ENCODE measurements at regions of chr7 and their contacts with region 1.

Region 1: GRCh38 chr7:158582089-158582456 is 5.5 kb downstream of the PTPRN2 start:
- DNase-seq: no peak
- H3K4me3 ChIP-seq: no peak overlapping the region
- H3K27ac ChIP-seq: no peak overlapping the region
- H3K4me1 ChIP-seq: no peaks in the 10 kb centered on the region
- H3K27me3 ChIP-seq: peaks cover 44% of the 10 kb centered on the region
- CTCF ChIP-seq: no peak

Region 2: DNA sequence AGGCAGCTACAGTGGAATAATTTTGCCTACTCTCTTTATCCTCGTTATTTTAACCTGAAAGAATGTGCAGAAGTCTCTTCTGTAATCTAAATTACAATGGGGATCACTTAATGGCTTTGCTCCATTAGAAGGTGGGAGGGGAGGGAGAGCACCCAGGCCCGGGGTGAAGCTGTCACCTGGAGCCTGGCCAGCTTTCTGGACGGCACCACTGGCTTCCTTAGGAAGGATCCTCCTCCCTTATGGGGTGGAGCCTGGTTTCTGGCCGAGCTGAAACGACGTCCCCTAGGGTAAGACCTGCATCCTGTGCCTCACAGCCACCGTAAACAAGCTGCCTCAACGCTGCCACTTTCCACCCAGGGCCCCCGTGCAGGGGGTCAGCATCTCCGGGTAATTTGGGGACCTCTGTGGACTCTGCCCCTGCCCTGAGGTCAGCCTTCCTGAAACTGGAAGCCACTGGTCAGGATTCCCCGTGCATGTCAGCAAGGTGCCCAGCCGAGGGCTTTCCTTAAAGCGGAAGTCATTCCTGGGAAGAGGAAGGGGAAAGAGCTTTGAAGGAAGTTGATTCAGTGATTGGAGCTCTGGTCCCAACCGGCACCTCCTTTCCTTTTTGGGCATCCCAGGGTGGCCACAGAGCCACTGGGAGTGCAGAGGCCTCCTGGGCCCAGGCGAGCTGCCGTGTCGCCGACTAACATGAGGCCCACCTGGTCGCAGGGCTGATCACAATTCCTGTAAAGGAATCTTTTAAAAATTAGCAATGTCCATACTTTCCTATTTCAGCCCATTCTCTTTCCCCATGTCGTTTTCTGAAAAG is 676.2 kb before region 1 on chr7:
- CTCF ChIA-PET with region 1: no interaction called
- POLR2A ChIA-PET with region 1: no interaction called
- intact Hi-C with region 1: no loop called
- DNase-seq: no peak
- H3K4me3 ChIP-seq: no peak overlapping the region
- H3K27ac ChIP-seq: no peak overlapping the region
- H3K4me1 ChIP-seq: no peaks in the 10 kb centered on the region
- H3K27me3 ChIP-seq: peaks cover 13% of the 10 kb centered on the region
- CTCF ChIP-seq: no peak

Region 3: DNA sequence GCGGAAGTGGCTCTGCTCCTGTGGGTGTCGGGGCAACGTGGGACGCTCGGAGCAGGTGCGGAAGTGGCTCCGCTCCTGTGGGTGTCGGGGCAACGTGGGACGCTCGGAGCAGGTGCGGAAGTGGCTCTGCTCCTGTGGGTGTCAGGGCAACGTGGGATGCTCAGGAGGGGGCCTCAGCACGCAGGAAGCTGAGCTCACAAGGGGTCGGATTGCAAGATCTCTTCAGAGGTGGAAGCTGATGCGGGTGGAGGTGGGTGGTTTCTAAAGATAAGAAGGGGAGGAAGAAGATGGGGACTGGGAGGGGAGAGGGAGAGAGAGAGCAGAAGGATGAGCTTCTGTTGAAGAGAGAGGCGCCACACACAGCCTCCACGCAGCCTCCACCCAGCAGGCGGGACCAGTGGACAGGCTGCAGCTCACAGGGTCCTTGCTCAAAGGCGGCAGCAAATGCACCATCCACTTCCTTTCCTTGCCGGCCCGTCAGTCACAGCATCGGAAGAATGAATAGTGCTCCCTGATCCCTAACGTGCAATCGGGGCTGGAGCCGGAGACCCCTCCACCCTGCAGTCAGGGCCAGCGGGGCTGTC is 73.2 kb before region 1 on chr7:
- CTCF ChIA-PET with region 1: no interaction called
- POLR2A ChIA-PET with region 1: interaction called, 18 read pairs
- intact Hi-C with region 1: no loop called
- DNase-seq: no peak
- H3K4me3 ChIP-seq: no peak overlapping the region
- H3K27ac ChIP-seq: no peak overlapping the region
- H3K4me1 ChIP-seq: no peaks in the 10 kb centered on the region
- H3K27me3 ChIP-seq: no peaks in the 10 kb centered on the region
- CTCF ChIP-seq: no peak

Region 4: GRCh38 chr7:158754746-158755444 is 172.8 kb after region 1 on chr7:
- CTCF ChIA-PET with region 1: no interaction called
- POLR2A ChIA-PET with region 1: no interaction called
- intact Hi-C with region 1: no loop called
- DNase-seq: no peak
- H3K4me3 ChIP-seq: no peak overlapping the region
- H3K27ac ChIP-seq: no peak overlapping the region
- H3K4me1 ChIP-seq: no peaks in the 10 kb centered on the region
- H3K27me3 ChIP-seq: no peaks in the 10 kb centered on the region
- CTCF ChIP-seq: no peak

Measured in A673 (cell line).